Ovary (tissue), 10 donors: ENCODE measurements at regions of chr3 and their contacts with region 1.

Region 1: DNA sequence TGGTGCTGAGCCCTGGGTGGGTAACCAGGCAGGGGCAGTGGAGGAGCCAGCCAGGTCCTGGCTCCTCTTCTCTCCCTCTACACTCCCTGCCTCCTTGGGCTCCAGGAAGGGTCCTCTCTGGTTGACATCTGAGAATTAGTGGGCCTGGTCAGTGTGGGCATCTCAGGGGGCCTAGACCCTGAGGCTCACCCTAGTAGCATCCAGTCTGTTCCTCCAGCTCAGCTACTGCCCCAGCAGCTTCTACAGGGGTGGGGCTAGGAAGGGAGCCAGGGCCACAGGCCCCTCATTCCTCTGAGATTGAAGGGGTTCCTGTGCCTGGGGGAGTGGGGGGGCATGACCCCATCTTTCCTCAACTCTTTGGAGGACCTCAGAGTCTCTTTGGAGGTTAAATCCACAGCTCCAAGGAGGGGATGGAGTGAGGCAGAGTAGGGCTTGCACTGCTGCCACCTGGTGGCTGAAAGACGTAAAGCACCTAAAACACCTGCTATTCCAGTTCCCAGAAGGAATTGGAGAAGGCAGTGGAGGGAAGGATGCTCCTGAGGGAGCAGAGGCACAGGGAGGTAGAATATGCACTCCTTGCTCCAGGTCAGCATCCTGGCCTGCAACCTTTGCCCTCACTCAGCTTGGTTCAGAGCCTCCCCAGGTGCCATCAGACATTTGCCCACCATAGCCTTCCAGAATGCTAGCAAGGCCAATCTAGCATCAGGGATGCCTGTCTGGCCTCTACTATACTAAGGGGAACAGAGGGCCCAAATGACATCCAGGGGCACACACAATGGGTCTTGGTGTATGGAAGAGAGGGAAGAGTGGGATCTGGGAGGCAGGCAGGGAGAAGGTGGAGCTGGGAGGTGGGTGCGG is 25.1 kb downstream of the C3orf18 start:
- DNase-seq: peak; percentile 56 to 82 (median 77)
- H3K4me3 ChIP-seq: no peak overlapping the region
- H3K27ac ChIP-seq: no peak overlapping the region
- H3K4me1 ChIP-seq: no peaks in the 10 kb centered on the region
- H3K27me3 ChIP-seq: no peaks in the 10 kb centered on the region
- CTCF ChIP-seq: peak; percentile 69 to 81 (median 80)
- EP300 ChIP-seq: no peak
- POLR2A ChIP-seq: no peak

Region 2: DNA sequence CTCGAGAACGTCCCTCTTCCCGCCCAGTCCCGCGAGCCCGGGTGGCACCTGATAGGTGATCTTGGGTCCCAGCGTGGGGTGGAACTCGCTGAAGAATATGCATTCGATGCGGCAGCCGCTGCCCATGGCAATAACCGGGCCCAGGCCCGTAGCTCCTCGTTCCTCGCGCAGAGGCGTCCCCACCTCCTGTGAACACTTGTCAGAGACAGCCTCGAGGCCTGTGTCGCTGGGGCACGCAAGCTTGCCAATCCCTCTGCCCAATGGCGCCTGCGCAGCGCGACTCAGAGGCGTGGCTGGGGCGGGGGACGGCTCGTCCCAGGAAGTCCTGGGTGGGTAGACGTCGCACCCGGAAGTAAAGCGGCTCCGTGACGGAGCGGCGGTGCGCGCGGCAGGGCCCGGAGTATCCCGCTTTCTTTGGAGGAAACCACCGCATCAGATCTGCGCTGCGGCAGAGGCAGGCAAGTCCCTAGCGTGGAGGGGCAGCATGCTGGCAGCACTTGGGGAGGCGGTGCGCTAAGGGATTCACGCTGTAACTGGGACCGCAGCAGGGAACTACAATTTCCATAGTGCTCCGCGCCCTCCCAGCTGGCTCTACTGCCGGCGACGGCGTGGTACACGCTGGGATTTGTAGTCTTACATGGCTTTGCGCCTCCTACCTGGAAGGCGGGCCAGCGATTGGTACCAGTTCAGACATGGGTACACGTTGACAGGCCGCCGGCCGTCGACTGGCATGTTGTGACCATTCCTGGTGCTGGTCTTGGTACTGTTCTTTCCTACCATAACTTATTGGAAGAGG is 191.7 kb before region 1 on chr3 and contains the starts of genes CYB561D2 and NPRL2:
- intact Hi-C with region 1: loop called (anchors 2 to 5 kb)
- DNase-seq: peak; percentile 94 to 95 (median 94)
- H3K4me3 ChIP-seq: peak within 1 kb of the TSS; percentile 75
- H3K27ac ChIP-seq: peak within 1 kb of the TSS; percentile 77 to 87
- H3K4me1 ChIP-seq: peaks cover 11% of the 10 kb centered on the region
- H3K27me3 ChIP-seq: no peaks in the 10 kb centered on the region
- CTCF ChIP-seq: no peak
- EP300 ChIP-seq: no peak
- POLR2A ChIP-seq: peak; percentile 65
- total RNA-seq, gene CYB561D2: 8.0 to 17.1 (median 9.6) TPM
- total RNA-seq, gene NPRL2: 19.4 to 26.3 (median 22.4) TPM

Region 3: GRCh38 chr3:50370594-50370993 is 171.8 kb before region 1 on chr3:
- intact Hi-C with region 1: loop called in 2 of 4 experiments (anchors 10 kb)
- DNase-seq: no peak
- H3K4me3 ChIP-seq: no peak overlapping the region
- H3K27ac ChIP-seq: no peak overlapping the region
- H3K4me1 ChIP-seq: peaks cover 2% of the 10 kb centered on the region
- H3K27me3 ChIP-seq: no peaks in the 10 kb centered on the region
- CTCF ChIP-seq: no peak
- EP300 ChIP-seq: no peak
- POLR2A ChIP-seq: no peak

Region 4: GRCh38 chr3:50436114-50436674 is 106.2 kb before region 1 on chr3:
- intact Hi-C with region 1: loop called in 2 of 4 experiments (anchors 5 to 10 kb)
- DNase-seq: peak in 4 of 5 donors; percentile 43 to 66 (median 49)
- H3K4me3 ChIP-seq: no peak overlapping the region
- H3K27ac ChIP-seq: no peak overlapping the region
- H3K4me1 ChIP-seq: no peaks in the 10 kb centered on the region
- H3K27me3 ChIP-seq: no peaks in the 10 kb centered on the region
- CTCF ChIP-seq: peak; percentile 12 to 34 (median 22)
- EP300 ChIP-seq: no peak
- POLR2A ChIP-seq: no peak

Region 5: DNA sequence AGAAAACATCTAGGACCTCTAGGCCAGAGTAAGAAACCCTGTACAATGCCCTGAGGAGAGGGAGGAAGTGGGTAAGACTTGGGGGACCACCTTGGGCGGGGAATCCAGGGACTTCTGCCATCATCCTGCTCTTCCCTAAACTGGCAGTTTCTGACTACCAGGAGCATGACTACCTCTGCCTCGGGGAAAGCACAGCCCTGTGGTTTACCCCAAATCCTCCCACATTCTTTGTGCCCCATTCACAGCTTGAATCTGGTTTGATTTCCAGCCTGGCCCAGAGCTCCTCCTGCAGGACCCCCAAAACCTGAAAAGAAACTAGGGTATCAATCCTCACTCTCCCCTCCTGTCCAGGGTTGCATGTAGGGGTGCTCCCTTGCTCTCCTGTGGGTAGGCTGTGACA is 20.5 kb after region 1 on chr3:
- intact Hi-C with region 1: no loop called
- DNase-seq: no peak
- H3K4me3 ChIP-seq: no peak overlapping the region
- H3K27ac ChIP-seq: no peak overlapping the region
- H3K4me1 ChIP-seq: peaks cover 6% of the 10 kb centered on the region
- H3K27me3 ChIP-seq: no peaks in the 10 kb centered on the region
- CTCF ChIP-seq: no peak
- EP300 ChIP-seq: no peak
- POLR2A ChIP-seq: no peak